OCI-LY7 (cell line): ENCODE measurements at regions of chr4 and their contacts with region 1.

Region 1: DNA sequence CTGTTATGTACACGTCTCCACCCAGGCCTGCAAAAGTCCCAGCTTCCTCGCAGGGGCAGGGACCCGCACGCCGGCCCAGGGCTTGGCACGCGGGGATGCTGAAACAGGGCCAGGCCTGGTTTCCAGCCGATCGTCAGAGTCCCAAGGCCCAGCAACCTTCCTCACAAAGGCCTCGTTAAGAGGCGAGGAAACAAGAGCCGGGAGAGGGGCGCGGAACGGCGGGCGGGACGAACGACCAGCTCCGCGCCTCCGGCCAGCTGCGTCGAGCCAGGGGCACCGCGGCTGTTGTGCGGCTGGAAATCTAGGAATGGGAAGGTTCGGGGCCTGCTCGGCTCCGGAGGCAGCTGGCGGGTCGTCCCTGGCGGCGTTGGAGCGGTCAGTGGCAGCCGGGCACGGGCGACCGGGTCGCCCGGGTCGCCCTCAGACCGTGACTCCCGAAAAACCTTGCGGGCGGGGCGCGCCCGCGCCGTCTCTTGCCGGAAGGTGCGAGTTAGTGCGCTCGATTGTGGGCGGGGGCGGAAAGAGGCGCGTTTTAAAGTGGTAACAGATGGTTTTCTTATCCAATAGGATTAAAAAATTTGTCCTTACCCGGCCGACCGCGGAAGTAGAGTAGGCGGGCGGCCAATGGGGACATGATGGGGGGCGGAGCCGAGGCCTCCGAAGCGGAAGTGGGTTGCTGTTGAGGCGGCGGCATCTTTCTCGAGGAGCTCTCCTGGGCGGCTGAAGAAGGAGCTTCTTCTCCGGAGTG is at the start of gene RNF4:
- DNase-seq: peak; percentile 98
- H3K4me3 ChIP-seq: peak within 1 kb of the TSS; percentile 92
- H3K27ac ChIP-seq: peak within 1 kb of the TSS; percentile 92
- H3K4me1 ChIP-seq: peaks cover 24% of the 10 kb centered on the region
- CTCF ChIP-seq: no peak
- total RNA-seq, gene RNF4: 63.6 and 65.0 TPM in 2 replicates

Region 2: GRCh38 chr4:1910643-1911042 is 558.0 kb before region 1 on chr4:
- CTCF ChIA-PET with region 1: no interaction called
- POLR2A ChIA-PET with region 1: no interaction called
- intact Hi-C with region 1: no loop called
- DNase-seq: peak; percentile 35
- H3K4me3 ChIP-seq: no peak overlapping the region
- H3K27ac ChIP-seq: no peak overlapping the region
- H3K4me1 ChIP-seq: peaks cover 3% of the 10 kb centered on the region
- CTCF ChIP-seq: peak; percentile 74

Region 3: DNA sequence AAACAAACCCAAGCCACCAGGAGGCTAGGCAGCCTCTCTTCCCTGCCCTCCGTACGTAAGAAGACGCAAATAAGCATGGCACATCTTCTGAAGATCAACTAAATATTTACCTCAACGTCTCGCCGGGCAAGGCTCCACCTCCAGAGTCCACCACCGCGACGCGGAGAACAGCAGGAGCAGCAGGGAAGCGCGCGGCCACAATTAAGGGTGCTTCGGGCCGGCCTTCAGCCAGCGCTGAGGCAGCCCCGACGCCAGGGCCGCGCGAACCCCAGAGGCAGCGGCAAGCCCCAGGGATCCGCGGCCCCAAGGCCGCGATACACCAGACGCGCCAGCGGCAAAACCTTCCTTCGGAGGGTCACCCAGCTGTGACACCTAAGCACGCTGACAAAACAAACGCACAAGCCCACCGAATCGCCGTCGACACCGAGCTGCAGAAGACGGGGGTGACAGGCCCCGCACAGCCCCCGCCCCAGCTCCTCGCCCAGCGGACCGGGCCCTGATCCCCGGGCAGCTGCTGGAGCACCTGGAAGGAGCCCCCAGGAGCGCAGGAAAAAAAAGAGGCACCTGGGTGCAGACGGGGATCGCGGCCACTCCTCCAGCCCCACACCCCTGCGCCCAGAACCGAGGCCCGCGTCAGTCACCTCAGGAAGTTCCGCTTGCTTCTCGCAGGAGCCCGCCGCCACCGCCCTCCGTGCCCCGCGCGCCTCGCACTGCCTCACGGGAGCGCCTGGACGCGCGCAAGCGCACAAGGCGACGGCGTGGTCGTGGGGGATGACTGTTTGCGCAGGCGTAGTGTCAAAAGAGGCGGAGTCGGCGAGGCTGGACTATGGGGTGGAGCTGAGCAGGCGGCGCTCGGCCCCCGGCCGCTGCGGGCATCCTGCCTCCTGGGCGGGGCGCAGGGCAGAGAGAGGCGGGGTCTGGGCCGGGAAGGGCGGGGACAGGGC is 226.9 kb before region 1 on chr4 and contains the starts of genes HAUS3 and POLN:
- CTCF ChIA-PET with region 1: no interaction called
- POLR2A ChIA-PET with region 1: no interaction called
- intact Hi-C with region 1: loop called (anchors 2 kb)
- DNase-seq: peak; percentile 98
- H3K4me3 ChIP-seq: peak within 1 kb of the TSS; percentile 86
- H3K27ac ChIP-seq: peak within 1 kb of the TSS; percentile 71
- H3K4me1 ChIP-seq: peaks cover 56% of the 10 kb centered on the region
- CTCF ChIP-seq: 0 out of 2 replicates have a peak, but pooled peaks have one; percentile 10
- total RNA-seq, gene HAUS3: 15.9 and 20.1 TPM in 2 replicates
- total RNA-seq, gene POLN: 2.7 and 4.4 TPM in 2 replicates

Region 4: GRCh38 chr4:2484993-2485392 is 16.4 kb after region 1 on chr4:
- CTCF ChIA-PET with region 1: no interaction called
- POLR2A ChIA-PET with region 1: interaction called, 7 read pairs
- intact Hi-C with region 1: loop called (anchors 1 kb)
- DNase-seq: peak; percentile 91
- H3K4me3 ChIP-seq: peak overlapping the region; percentile 50
- H3K27ac ChIP-seq: peak overlapping the region; percentile 81
- H3K4me1 ChIP-seq: peaks cover 64% of the 10 kb centered on the region
- CTCF ChIP-seq: no peak

Region 5: DNA sequence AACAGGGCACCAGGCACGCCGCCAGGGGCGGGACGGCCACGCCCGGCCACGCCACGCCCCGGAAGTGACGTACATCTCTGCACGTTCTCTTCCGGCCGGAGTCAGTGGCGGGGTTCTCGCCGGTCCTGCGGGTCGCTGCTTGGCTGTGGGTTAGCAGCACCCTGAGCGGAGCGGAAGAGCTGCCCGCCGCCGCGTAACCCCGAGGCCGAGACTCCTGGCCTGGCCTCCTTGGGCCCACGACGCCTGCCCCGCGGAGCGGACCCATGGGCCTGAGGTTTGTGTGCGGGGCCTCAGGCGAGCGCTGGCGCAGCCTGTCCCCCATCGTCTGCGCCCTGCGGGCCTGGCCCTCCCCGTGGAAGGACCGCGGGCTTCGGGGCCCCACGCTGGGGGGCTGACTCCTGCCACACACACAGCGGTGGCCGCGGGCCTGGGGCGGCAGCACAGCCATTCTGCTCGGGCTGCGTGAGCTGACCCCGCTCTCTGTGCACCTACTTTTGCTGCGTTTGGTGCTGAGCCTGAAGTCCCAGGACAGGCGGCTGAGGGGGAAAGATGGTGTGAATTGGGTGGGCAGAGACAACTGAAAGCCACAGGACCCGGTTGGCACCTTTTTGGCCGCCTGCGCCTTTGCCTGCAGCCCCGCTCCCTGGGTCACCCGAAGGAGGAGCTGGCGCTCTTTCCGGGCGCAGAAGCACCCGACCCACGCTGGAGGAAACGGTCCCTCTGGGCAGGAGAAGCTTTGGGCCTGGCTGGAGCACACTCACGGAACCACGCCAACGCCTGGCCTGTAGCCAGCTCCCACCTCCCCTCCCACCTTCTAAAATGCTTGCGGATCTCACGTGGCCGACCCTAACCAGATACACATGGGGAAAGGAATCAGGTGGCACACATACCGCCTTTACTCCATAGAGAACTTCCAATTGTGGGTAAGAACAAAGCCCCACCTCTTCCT is 466.5 kb after region 1 on chr4:
- CTCF ChIA-PET with region 1: no interaction called
- POLR2A ChIA-PET with region 1: no interaction called
- intact Hi-C with region 1: loop called (anchors 10 kb)
- DNase-seq: peak; percentile 96
- H3K4me3 ChIP-seq: peak overlapping the region; percentile 98
- H3K27ac ChIP-seq: peak overlapping the region; percentile 53
- H3K4me1 ChIP-seq: peaks cover 56% of the 10 kb centered on the region
- CTCF ChIP-seq: 0 out of 2 replicates have a peak, but pooled peaks have one; percentile 26